ENCODE measurements at regions of chr6 and their contacts with region 1.

Region 1: GRCh38 chr6:122399384-122400158 is at the start of gene HSF2:
- DNase-seq: peak; percentile 96
- H3K4me3 ChIP-seq: peak within 1 kb of the TSS; percentile 89 to 99
- H3K27ac ChIP-seq: peak within 1 kb of the TSS; percentile 80 to 84
- H3K4me1 ChIP-seq: no peaks in the 10 kb centered on the region
- H3K27me3 ChIP-seq: no peaks in the 10 kb centered on the region
- CTCF ChIP-seq: peak in 3 of 4 experiments; percentile 26 to 42 (median 41)
- POLR2A ChIP-seq: peak; percentile 41
- total RNA-seq, gene HSF2: 13.8 to 59.5 TPM

Region 2: DNA sequence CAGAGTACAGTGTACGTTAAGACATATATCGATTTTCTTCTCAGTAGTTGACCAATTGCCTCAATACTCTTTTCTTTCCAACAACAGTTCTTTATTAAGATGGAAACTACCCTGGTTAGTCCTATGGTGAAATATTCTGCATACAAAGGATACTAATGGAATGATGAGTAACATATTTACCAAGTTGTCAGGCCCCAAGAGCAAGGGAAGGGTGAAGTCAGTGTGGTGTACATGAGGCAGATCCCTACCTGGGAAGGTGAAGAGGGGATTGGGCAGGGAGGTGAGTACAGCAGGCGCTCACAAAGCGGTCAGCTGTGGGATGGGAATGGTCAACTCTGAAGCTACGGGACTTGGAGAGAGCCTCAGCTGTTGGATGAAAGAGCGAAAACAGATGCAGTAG is 934.5 kb before region 1 on chr6:
- intact Hi-C with region 1: no loop called
- DNase-seq: no peak
- H3K4me3 ChIP-seq: no peak overlapping the region
- H3K27ac ChIP-seq: no peak overlapping the region
- H3K4me1 ChIP-seq: no peaks in the 10 kb centered on the region
- H3K27me3 ChIP-seq: no peaks in the 10 kb centered on the region
- CTCF ChIP-seq: no peak
- POLR2A ChIP-seq: no peak

Region 3: DNA sequence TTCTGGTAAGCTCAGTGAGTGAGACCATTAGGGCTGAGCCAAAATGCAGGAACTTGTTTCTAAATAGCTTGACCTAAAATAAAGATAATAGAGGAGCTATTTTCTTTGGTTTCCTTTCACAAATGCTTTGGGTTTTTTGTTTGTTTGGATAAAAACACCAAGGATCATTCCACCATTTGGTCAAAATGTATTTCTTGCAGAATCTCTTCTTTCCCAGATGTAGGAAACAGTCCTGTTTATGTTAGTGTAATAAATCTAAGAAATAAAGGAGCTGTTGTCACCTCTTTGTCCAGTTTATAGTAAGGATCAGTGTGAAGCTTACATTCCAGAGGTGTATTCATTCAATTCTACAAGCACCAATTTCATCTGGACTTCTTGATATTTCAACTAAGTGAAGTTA is 666.3 kb before region 1 on chr6:
- intact Hi-C with region 1: no loop called
- DNase-seq: no peak
- H3K4me3 ChIP-seq: no peak overlapping the region
- H3K27ac ChIP-seq: no peak overlapping the region
- H3K4me1 ChIP-seq: no peaks in the 10 kb centered on the region
- H3K27me3 ChIP-seq: no peaks in the 10 kb centered on the region
- CTCF ChIP-seq: no peak
- POLR2A ChIP-seq: no peak

Region 4: GRCh38 chr6:122471107-122472021 is 71.8 kb after region 1 on chr6 and contains the start of gene SERINC1:
- intact Hi-C with region 1: loop called (anchors 2 kb)
- DNase-seq: peak; percentile 96
- H3K4me3 ChIP-seq: peak within 1 kb of the TSS; percentile 84 to 87
- H3K27ac ChIP-seq: peak within 1 kb of the TSS; percentile 95 to 98
- H3K4me1 ChIP-seq: no peaks in the 10 kb centered on the region
- H3K27me3 ChIP-seq: no peaks in the 10 kb centered on the region
- CTCF ChIP-seq: no peak
- POLR2A ChIP-seq: peak; percentile 90
- total RNA-seq, gene SERINC1: 159 to 165 TPM

Measured in prostate gland (tissue), 2 donors.